ENCODE measurements at regions of chr17 and their contacts with region 1.

Region 1: DNA sequence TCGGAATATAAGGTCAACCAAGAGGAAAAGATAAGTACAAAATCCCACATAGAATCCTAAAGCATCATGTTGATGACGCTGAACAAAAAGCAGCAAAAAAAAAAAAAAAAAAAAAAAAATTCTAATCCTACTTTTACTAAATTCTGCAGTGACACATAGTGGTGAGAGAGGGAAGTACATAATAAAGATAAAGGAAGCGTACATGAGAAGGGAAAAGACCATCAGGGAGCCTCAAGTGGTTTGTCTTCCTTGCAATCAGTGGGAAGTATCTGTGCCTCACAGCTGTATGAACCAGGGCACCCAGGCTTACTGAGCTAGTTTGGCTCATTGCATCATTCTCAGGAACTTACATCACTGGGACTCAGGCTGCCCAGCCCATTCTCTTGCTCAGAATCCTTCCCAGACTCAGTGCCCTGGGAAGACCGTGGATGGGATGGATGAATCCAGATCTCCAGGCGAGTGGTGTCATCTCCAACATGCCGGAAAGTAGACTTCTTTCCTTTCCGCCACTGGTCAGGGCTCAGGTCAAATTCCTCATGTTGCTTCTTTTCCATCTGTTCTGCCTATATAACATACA is 21.2 kb downstream of the SMG6 start:
- DNase-seq: peak in 3 of 10 donors; percentile 62 to 69 (median 66)
- ATAC-seq: peak; percentile 50 to 65
- H3K4me3 Mint-ChIP-seq: no peak overlapping the region
- H3K27ac Mint-ChIP-seq: peak overlapping the region in 9 of 10 donors; percentile 25 to 87 (median 75)
- H3K4me1 Mint-ChIP-seq: peaks cover 10 to 31% (median 21%) of the 10 kb centered on the region in 4 donors
- H3K27me3 Mint-ChIP-seq: no peaks in the 10 kb centered on the region

Region 2: DNA sequence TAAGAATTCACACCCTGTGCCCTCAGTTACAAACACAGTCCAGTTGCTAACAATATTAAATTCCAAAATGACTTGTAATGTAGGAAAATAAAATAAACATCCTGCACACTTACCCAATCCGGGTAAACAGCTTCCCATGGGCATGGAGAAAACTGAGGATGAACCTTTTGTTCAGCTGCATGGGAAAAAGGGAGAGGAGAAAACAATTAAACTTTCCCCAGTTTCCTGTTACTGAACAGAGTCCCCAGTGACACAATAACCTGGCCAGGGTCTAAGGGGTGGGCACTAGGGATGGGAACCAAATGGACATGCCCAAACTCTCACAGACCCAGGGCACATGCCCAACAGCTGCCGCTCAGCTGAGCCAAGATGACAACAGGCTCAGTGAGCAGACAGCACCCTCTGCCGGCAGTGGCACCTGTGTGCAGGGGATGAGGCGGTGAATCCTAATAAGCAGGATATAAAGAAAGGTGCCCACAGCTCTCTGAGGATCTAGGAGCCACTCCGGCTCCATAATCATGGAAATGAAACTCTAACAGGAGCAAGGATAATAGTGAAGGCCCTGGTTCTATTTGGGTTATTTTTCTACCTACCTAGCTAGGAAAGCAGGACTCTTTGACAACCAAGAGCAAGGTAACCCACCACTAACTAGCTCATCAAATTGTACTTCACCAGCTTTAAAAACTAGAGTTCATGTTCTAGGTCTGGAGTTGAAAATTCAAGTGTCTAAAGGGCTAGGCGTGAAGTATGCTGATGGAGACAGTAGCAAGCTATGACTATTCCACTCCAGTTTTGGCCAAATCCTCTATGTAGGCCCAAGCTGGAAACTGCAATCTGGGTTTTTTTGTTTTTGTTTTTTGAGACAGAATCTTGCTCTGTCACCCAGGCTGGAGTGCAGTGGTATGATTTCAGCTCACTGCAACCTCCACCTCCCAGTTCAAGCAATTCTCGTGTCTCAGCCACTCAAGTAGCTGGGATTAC is 37.5 kb before region 1 on chr17:
- POLR2A ChIA-PET with region 1: interaction called, 10 read pairs
- DNase-seq: peak; percentile 68 to 89 (median 77)
- ATAC-seq: peak; percentile 99
- H3K4me3 Mint-ChIP-seq: no peak overlapping the region
- H3K27ac Mint-ChIP-seq: peak overlapping the region in 9 of 10 donors; percentile 40 to 94 (median 65)
- H3K4me1 Mint-ChIP-seq: peaks cover 8 to 39% (median 25%) of the 10 kb centered on the region in 4 donors
- H3K27me3 Mint-ChIP-seq: no peaks in the 10 kb centered on the region